Esophagus muscularis mucosa (tissue), 4 donors: ENCODE measurements at regions of chrX and their contacts with region 1.

Region 1: GRCh38 chrX:69280933-69281332 is 115.7 kb upstream of the PJA1 start:
- DNase-seq: no peak
- H3K4me3 ChIP-seq: no peak overlapping the region
- H3K27ac ChIP-seq: no peak overlapping the region
- H3K4me1 ChIP-seq: peaks cover 3 to 61% (median 54%) of the 10 kb centered on the region in 4 donors
- H3K27me3 ChIP-seq: no peaks in the 10 kb centered on the region
- CTCF ChIP-seq: no peak
- EP300 ChIP-seq: no peak
- POLR2A ChIP-seq: no peak

Region 2: GRCh38 chrX:69163936-69164741 is 116.8 kb before region 1 on chrX:
- intact Hi-C with region 1: loop called (anchors 5 kb)
- DNase-seq: peak; percentile 53
- H3K4me3 ChIP-seq: peak overlapping the region; percentile 63 to 78 (median 72)
- H3K27ac ChIP-seq: peak overlapping the region; percentile 76 to 87 (median 84)
- H3K4me1 ChIP-seq: peaks cover 0 to 24% (median 21%) of the 10 kb centered on the region in 4 donors
- H3K27me3 ChIP-seq: no peaks in the 10 kb centered on the region
- CTCF ChIP-seq: no peak
- EP300 ChIP-seq: no peak
- POLR2A ChIP-seq: no peak

Region 3: DNA sequence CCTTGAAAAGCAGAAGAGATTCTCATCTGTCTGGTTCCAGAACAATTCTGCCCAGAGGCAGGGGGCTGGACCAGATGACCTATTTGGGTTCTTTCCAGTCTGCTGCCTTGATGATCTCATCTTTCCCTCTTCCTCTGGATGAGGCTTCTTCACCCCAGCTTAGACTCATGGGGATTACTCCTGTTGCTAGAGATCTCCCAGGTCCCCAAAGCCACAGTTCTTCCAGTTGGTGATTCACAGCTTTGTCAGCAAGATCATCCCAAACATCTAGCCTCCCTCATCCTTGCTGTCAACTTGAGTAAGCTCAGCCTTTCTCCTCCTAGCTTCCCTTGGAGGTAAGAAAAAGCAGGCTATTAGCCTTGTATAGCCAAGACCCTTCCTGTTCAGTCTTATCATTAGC is 51.5 kb before region 1 on chrX:
- intact Hi-C with region 1: loop called (anchors 5 kb)
- DNase-seq: no peak
- H3K4me3 ChIP-seq: no peak overlapping the region
- H3K27ac ChIP-seq: no peak overlapping the region
- H3K4me1 ChIP-seq: peaks cover 0 to 17% (median 11%) of the 10 kb centered on the region in 4 donors
- H3K27me3 ChIP-seq: no peaks in the 10 kb centered on the region
- CTCF ChIP-seq: no peak
- EP300 ChIP-seq: no peak
- POLR2A ChIP-seq: no peak

Region 4: DNA sequence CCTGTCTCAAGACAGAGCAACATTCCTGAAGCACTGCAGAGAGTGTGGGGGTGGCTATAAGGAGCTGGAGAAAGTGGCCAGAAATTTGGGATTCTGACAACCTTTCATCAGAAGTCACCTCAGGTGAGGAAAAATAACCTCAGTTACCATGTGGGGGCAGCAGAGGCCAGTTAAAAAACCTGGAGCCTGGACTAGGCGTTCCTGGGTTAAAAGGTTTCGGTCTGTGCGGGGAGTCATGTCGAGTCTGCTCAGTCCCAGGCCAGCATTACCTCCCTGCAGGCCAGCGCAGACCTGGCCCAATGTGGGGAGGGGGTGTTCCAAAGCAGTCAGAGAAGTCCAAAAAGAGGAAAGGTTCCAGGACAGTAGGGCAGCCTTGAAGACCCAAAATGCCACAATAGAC is 212.3 kb after region 1 on chrX:
- intact Hi-C with region 1: no loop called
- DNase-seq: no peak
- H3K4me3 ChIP-seq: no peak overlapping the region
- H3K27ac ChIP-seq: no peak overlapping the region
- H3K4me1 ChIP-seq: no peaks in the 10 kb centered on the region
- H3K27me3 ChIP-seq: no peaks in the 10 kb centered on the region
- CTCF ChIP-seq: peak; percentile 25 to 50 (median 40)
- EP300 ChIP-seq: no peak
- POLR2A ChIP-seq: no peak